GM18951 (cell line): ENCODE measurements at regions of chr10 and their contacts with region 1.

Region 1: GRCh38 chr10:48656241-48656913 is 28.3 kb upstream of the WDFY4 start:
- POLR2A ChIP-seq: peak; percentile 22

Region 2: DNA sequence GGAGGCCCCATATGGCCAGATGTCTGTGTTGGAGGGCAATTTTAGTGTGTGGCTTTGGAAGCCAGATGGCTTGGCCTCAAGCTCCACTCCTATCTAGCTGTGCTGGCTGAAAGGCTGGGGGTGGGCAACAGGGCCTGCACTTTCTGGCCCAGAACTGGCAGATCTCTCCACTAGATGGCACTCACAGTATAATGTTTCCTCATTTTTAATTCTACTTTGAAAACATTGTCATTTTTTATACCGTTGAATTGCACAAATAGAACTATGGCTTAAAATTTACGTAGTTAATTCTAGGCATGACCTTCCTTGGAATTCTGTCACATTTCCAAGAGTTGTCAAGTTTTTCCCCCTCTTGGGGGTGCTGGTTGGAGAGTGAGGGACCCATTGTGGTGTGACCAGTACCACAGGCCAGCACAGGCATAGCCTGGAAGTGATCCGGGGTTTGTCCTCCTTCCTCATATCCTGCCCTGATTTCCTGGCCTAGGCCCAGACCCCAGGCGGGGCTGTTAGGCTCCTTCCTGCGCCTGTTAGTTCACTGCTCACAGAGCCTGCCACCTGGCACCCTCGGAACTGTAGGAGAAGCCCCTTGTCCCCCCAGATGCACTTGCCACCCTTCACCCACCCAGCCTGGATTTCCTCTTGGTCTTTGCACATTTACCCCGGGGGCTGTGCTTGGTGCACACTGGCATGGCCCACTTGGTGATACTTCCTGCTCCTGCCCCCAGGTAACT is 104.4 kb before region 1 on chr10:
- in situ Hi-C with region 1: loop called (anchors 5 kb)
- POLR2A ChIP-seq: no peak

Region 3: GRCh38 chr10:48608279-48608681 is 48.1 kb before region 1 on chr10:
- in situ Hi-C with region 1: loop called (anchors 10 kb)
- POLR2A ChIP-seq: no peak

Region 4: GRCh38 chr10:48708144-48708543 is 51.8 kb after region 1 on chr10:
- in situ Hi-C with region 1: loop called (anchors 10 kb)
- POLR2A ChIP-seq: no peak

Region 5: DNA sequence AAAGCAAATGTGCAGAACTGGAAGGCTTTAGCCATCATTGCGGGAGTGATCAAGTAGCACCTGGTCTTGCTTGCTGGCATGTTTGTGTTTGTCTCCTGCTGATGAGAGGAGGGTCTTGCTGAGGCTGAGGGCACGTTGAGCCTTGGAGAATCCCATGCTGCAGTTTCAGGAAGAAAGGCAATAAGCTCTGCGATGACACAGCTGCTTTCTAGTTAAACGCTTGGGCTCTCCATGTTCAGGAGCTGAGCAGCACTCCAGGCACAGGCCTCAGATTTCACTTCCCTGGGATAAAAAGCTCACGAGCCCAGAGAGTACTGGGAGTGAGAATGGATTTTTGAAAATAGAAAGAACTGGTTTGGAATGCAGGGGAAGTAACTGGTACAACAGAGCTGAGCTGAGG is 182.5 kb after region 1 on chr10:
- in situ Hi-C with region 1: no loop called
- POLR2A ChIP-seq: no peak

Region 6: GRCh38 chr10:49518982-49519578 is 862.7 kb after region 1 on chr10:
- in situ Hi-C with region 1: loop called (anchors 25 kb)
- POLR2A ChIP-seq: no peak